Caco-2 (cell line): ENCODE measurements at regions of chr13 and their contacts with region 1.

Region 1: DNA sequence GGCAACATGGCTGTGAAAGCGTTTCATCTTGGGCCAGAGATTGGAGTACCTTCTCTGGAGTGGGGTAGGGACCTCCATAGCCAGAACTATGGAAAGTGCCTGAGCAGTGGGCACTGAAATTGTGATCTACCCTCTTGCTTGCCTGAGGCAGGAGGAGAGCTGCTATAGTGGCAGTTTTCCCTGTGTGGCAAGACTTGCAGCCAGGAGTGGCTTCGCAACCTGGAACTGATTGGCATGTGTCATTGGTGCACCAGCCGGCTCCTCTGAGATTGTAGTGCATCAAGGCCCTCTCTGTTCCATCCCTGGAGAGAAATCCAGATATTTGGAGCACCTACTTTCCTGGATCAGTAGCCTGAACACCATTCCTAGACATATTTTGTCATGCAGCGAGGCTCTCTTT is 1882.8 kb downstream of the OLFM4 start:
- DNase-seq: no peak
- H3K4me3 ChIP-seq: no peak overlapping the region
- H3K4me3 Mint-ChIP-seq: no peak overlapping the region
- H3K27ac Mint-ChIP-seq: no peak overlapping the region
- H3K4me1 ChIP-seq: no peaks in the 10 kb centered on the region
- H3K4me1 Mint-ChIP-seq: no peaks in the 10 kb centered on the region
- H3K27me3 ChIP-seq: no peaks in the 10 kb centered on the region
- H3K27me3 Mint-ChIP-seq: no peaks in the 10 kb centered on the region
- CTCF ChIP-seq: no peak

Region 2: DNA sequence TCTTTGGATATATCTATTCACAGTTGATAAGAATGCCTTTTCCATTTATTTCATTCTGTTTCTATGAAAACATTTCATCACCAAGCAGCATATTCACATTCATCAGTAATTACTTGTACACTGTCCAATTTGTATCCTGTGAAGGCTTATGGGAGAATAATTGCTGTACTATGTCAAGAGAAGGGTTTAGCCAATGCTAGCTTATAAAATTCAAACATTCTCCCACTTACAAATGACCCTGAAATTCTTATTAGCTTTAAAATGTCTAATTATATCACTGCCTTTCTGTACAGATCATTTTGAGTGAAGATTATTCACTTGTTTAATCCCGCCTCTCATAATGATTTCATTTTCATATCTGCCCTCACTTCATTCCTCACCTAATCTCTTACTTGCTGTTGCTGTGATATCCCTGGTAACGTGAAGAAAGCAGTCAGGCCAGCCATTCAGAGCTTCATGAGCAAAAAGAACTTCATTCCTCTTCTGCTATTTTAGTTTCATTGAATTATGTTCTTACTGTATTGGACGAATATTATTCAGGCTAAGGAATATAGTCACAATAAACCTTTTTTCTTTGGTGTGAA is 1104.1 kb before region 1 on chr13:
- CTCF ChIA-PET with region 1: no interaction called
- POLR2A ChIA-PET with region 1: no interaction called
- intact Hi-C with region 1: no loop called
- DNase-seq: no peak
- H3K4me3 ChIP-seq: no peak overlapping the region
- H3K4me3 Mint-ChIP-seq: no peak overlapping the region
- H3K27ac Mint-ChIP-seq: no peak overlapping the region
- H3K4me1 ChIP-seq: no peaks in the 10 kb centered on the region
- H3K4me1 Mint-ChIP-seq: no peaks in the 10 kb centered on the region
- H3K27me3 ChIP-seq: no peaks in the 10 kb centered on the region
- H3K27me3 Mint-ChIP-seq: peaks cover 5% of the 10 kb centered on the region
- CTCF ChIP-seq: no peak

Region 3: DNA sequence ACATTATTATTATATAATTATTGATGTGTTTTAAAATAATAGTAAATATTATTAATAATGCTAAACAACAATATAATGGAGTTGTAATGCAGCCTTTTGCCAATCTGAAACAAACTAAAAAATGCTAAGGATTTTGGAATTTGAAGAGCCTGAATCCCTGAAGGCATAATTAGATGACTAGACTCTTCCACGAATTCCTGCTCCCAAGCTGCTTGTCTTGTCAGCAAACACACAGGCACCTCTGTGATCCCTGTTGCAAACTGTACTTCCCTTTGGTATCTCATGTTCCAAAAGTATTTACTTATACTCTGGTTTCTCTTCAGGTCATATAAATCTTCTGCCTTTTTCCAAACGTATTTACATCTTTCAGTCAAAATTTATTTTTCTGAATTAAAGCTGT is 20.5 kb before region 1 on chr13:
- CTCF ChIA-PET with region 1: no interaction called
- POLR2A ChIA-PET with region 1: no interaction called
- intact Hi-C with region 1: loop called (anchors 1 kb)
- DNase-seq: no peak
- H3K4me3 ChIP-seq: no peak overlapping the region
- H3K4me3 Mint-ChIP-seq: no peak overlapping the region
- H3K27ac Mint-ChIP-seq: no peak overlapping the region
- H3K4me1 ChIP-seq: no peaks in the 10 kb centered on the region
- H3K4me1 Mint-ChIP-seq: peaks cover 9% of the 10 kb centered on the region
- H3K27me3 ChIP-seq: no peaks in the 10 kb centered on the region
- H3K27me3 Mint-ChIP-seq: peaks cover 4% of the 10 kb centered on the region
- CTCF ChIP-seq: no peak

Region 4: GRCh38 chr13:54965881-54966280 is 54.4 kb after region 1 on chr13:
- CTCF ChIA-PET with region 1: no interaction called
- POLR2A ChIA-PET with region 1: no interaction called
- intact Hi-C with region 1: no loop called
- DNase-seq: no peak
- H3K4me3 ChIP-seq: no peak overlapping the region
- H3K4me3 Mint-ChIP-seq: no peak overlapping the region
- H3K27ac Mint-ChIP-seq: no peak overlapping the region
- H3K4me1 ChIP-seq: no peaks in the 10 kb centered on the region
- H3K4me1 Mint-ChIP-seq: no peaks in the 10 kb centered on the region
- H3K27me3 ChIP-seq: no peaks in the 10 kb centered on the region
- H3K27me3 Mint-ChIP-seq: no peaks in the 10 kb centered on the region
- CTCF ChIP-seq: no peak